ENCODE measurements at regions of chr19 and their contacts with region 1.

Region 1: DNA sequence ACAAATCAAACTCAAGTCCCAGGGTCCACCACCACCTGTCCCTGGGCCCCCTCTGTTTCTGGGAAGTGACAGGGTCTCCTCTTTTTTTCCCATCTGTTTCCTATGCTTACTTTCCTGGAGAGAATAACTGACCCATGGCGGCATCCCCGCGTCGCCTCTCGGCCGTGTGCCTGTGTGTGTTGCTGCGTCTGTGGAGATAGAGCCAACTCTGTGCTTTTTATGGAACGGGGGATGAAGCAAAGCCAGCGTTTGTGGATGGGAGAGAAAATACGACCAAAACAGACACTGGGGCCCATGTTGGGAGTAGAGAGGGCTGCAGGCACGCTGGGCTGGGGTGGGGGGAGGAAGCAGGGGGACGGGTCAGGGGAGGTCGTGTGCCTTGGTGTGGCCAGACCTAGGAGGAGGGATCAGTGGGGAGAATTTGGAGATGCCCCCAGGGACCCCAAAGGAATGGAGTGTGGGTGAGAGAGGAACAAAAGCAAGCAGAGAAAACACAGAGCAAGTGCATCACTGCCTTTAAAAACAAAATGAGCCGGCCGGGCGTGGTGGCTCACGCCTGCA is 16.6 kb downstream of the PLK5 start:
- DNase-seq: no peak
- CTCF ChIP-seq: no peak

Region 2: GRCh38 chr19:1087813-1088415 is 452.5 kb before region 1 on chr19:
- in situ Hi-C with region 1: no loop called
- DNase-seq: peak; percentile 52
- CTCF ChIP-seq: no peak

Region 3: DNA sequence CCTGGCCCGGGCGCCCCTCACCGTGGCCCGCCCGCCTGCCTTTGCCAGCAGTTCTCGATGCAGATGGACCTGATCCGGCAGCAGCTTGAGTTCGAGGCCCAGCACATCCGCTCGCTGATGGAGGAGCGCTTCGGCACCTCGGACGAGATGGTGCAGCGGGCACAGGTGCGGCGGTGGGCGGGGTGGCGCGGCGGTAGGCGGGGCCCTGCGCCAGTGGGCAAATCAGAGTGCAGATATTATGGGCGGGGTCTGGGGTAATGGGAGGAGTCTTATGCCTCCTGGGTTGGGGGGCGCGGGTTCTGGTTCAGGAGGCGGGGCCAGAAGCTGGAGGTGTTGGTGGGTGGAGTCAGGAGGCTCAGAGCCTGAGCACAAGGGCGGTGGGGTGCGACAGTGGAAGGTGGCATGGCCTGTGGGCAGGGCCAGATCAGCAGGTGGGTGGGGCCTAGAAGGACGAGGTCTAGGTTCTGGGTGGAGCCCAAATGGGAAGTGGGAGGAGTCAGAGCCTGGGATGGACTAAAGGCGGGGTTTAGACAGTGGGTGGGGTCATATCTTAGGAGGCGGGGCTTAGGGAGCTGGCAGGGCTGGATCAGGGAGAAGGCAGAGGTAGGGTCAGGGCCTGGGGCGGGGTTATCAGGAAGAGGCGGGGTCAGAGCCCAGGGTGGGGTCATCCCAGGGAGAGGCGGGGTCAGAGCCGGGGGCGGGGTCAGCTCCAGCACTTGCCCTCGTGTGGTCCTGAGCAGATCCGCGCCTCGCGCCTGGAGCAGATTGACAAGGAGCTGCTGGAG is 84.9 kb before region 1 on chr19:
- in situ Hi-C with region 1: no loop called
- DNase-seq: peak; percentile 84
- CTCF ChIP-seq: no peak

Region 4: GRCh38 chr19:1470203-1471009 is 70.0 kb before region 1 on chr19:
- in situ Hi-C with region 1: no loop called
- DNase-seq: peak; percentile 83
- CTCF ChIP-seq: no peak

Region 5: GRCh38 chr19:1672038-1672768 is 131.8 kb after region 1 on chr19:
- in situ Hi-C with region 1: no loop called
- DNase-seq: peak; percentile 83
- CTCF ChIP-seq: peak; percentile 84

Region 6: DNA sequence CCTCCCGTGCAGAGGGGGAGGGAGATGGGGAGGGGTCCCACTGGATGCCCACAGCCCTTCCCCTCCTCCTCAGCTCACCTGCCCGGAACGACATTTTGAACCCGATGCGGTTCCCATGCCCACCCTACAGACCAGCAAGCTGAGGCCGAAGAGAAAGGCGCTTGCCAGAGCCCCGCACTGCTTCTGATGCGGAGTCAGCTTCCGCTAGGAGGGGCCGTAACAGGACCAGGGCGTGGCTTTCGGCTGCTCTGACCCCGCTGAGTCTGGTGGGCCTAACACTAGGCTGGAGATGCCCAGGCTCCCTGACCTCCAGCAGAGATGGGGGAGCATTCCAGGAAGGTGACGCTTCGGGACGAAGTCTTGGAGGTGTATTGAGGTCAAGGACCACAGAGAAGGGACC is 219.6 kb after region 1 on chr19:
- in situ Hi-C with region 1: loop called (anchors 5 kb)
- DNase-seq: no peak
- CTCF ChIP-seq: no peak

Measured in GM13976 (cell line).